Left colon (tissue), 2 donors: ENCODE measurements at regions of chr17 and their contacts with region 1.

Region 1: DNA sequence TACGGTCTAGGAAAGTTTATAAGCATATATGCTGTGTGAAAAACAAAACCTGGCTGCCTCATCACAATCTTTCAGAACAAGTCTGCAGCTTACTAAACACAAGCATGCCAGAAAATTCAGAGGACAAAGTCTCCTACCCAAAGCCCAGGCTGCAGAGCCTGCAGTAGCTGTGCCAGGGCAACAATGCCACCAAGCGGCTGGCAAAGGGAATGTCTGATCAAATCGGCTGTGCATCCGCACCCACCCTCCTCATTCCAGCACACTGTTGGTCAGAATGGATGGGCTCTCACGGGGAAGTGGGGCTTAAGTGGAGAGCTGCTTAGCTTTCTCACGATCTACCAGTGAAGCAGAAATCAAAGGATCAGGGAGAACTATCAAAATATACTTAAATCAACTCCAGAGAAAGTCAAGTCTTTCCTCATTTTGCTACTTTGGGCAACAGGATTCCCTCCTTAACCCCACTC is 73.5 kb downstream of the CYTH1 start:
- DNase-seq: peak; percentile 60 to 61
- ATAC-seq: peak; percentile 96

Region 2: GRCh38 chr17:78497115-78497540 is 211.4 kb before region 1 on chr17:
- intact Hi-C with region 1: loop called in 1 of 2 experiments (anchors 5 kb)
- DNase-seq: peak; percentile 57 to 67
- ATAC-seq: peak; percentile 91

Region 3: GRCh38 chr17:78774956-78775571 is 66.5 kb after region 1 on chr17:
- intact Hi-C with region 1: no loop called
- DNase-seq: peak in 1 of 2 donors; percentile 38
- ATAC-seq: peak; percentile 12